CD4-positive, alpha-beta T cell (primary cell): ENCODE measurements at regions of chr18 and their contacts with region 1.

Region 1: DNA sequence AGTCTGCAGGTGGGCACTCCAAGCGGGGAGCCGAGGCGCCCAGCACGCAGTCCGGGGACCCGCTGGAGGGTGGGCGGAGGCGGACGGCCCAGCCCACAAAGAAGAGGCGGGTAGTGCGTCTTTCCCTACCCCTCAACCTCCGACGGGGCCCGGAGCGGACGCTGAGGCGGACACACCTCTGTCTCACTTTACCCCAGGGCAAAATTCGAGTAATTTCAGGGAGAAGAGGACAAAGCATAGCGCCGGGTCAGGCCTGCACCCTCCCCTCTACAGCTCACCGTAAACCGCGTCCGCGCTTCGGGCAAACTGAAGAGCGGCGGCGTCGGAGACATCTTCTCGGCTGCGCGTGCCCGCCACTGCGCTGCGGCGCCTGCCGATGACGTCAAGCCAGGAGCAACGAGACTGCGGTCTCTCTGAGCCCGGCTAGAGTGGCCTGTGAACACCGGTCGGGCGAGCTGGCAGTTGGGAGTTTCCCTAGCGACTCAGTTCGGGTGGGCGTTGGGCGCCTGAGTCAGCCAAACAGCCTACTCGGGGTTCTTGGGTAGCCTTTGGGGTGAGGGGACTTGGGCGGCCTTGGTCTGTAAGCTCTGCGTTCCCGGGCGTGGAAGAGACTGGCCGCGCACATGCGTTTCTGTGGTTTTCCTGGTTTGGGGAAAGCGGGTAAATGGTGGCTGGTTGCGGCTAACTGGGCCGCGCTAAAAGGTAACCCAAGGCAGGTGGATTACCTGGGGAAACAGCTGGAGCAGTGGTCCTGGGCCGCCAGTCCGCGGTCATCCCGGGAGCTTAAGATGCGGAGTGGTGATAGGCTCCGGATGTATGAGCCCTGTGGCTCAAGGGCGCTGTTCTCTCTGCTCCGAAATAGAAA is at the start of gene THOC1:
- DNase-seq: peak; percentile 85 to 97 (median 92)
- ATAC-seq: peak; percentile 89
- H3K4me3 ChIP-seq: peak within 1 kb of the TSS; percentile 99
- H3K4me3 Mint-ChIP-seq: peak within 1 kb of the TSS; percentile 98
- H3K27ac ChIP-seq: peak within 1 kb of the TSS; percentile 97 to 98
- H3K27ac Mint-ChIP-seq: peak within 1 kb of the TSS; percentile 100
- H3K4me1 ChIP-seq: peaks cover 24% of the 10 kb centered on the region
- H3K4me1 Mint-ChIP-seq: peaks cover 44% of the 10 kb centered on the region
- H3K27me3 ChIP-seq: no peaks in the 10 kb centered on the region
- H3K27me3 Mint-ChIP-seq: no peaks in the 10 kb centered on the region
- CTCF ChIP-seq: no peak
- total RNA-seq, gene THOC1: 92.9 to 96.5 TPM

Region 2: GRCh38 chr18:111292-112014 is 156.5 kb before region 1 on chr18:
- CTCF ChIA-PET with region 1: no interaction called
- POLR2A ChIA-PET with region 1: interaction called, 3 read pairs
- intact Hi-C with region 1: loop called in 1 of 2 experiments (anchors 5 kb)
- DNase-seq: peak; percentile 39 to 89 (median 70)
- ATAC-seq: peak; percentile 48
- H3K4me3 ChIP-seq: peak overlapping the region; percentile 41
- H3K4me3 Mint-ChIP-seq: peak overlapping the region; percentile 92
- H3K27ac ChIP-seq: peak overlapping the region in 1 of 2 donors; percentile 84
- H3K27ac Mint-ChIP-seq: peak overlapping the region; percentile 89
- H3K4me1 ChIP-seq: peaks cover 10% of the 10 kb centered on the region
- H3K4me1 Mint-ChIP-seq: peaks cover 15% of the 10 kb centered on the region
- H3K27me3 ChIP-seq: no peaks in the 10 kb centered on the region
- H3K27me3 Mint-ChIP-seq: peaks cover 4% of the 10 kb centered on the region
- CTCF ChIP-seq: no peak

Region 3: GRCh38 chr18:199768-200167 is 68.2 kb before region 1 on chr18:
- CTCF ChIA-PET with region 1: no interaction called
- POLR2A ChIA-PET with region 1: no interaction called
- intact Hi-C with region 1: loop called in 1 of 2 experiments (anchors 10 kb)
- DNase-seq: no peak
- ATAC-seq: no peak
- H3K4me3 ChIP-seq: no peak overlapping the region
- H3K4me3 Mint-ChIP-seq: no peak overlapping the region
- H3K27ac ChIP-seq: no peak overlapping the region
- H3K27ac Mint-ChIP-seq: no peak overlapping the region
- H3K4me1 ChIP-seq: no peaks in the 10 kb centered on the region
- H3K4me1 Mint-ChIP-seq: peaks cover 10% of the 10 kb centered on the region
- H3K27me3 ChIP-seq: no peaks in the 10 kb centered on the region
- H3K27me3 Mint-ChIP-seq: no peaks in the 10 kb centered on the region
- CTCF ChIP-seq: no peak

Region 4: DNA sequence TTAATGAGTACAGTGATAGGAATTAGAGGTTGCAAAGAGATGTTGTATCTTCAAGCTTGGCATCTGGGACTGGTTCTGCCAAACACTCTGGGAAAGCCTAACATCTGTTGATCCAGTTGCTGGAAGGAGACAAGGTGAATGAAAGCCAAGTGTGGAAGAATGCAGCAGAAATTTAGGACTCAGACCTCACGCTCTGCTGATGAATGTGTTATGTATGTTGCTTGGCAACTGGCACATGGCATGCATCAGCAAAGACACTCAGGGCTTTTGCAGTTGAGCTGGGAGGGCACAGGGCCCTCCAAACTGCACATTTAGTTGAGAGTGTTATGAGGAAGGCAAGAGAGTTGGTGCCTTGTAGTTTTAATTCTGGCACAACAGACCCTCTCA is 127.1 kb after region 1 on chr18:
- CTCF ChIA-PET with region 1: no interaction called
- POLR2A ChIA-PET with region 1: no interaction called
- intact Hi-C with region 1: no loop called
- DNase-seq: no peak
- ATAC-seq: no peak
- H3K4me3 ChIP-seq: no peak overlapping the region
- H3K4me3 Mint-ChIP-seq: no peak overlapping the region
- H3K27ac ChIP-seq: no peak overlapping the region
- H3K27ac Mint-ChIP-seq: no peak overlapping the region
- H3K4me1 ChIP-seq: no peaks in the 10 kb centered on the region
- H3K4me1 Mint-ChIP-seq: no peaks in the 10 kb centered on the region
- H3K27me3 ChIP-seq: peaks cover 0 to 5% of the 10 kb centered on the region in 2 experiments
- H3K27me3 Mint-ChIP-seq: peaks cover 7% of the 10 kb centered on the region
- CTCF ChIP-seq: no peak

Region 5: GRCh38 chr18:616380-616995 is 348.6 kb after region 1 on chr18:
- CTCF ChIA-PET with region 1: no interaction called
- POLR2A ChIA-PET with region 1: no interaction called
- intact Hi-C with region 1: loop called in 1 of 2 experiments (anchors 5 kb)
- DNase-seq: peak in 4 of 14 experiments; percentile 4 to 54 (median 46)
- ATAC-seq: no peak
- H3K4me3 ChIP-seq: no peak overlapping the region
- H3K4me3 Mint-ChIP-seq: no peak overlapping the region
- H3K27ac ChIP-seq: no peak overlapping the region
- H3K27ac Mint-ChIP-seq: no peak overlapping the region
- H3K4me1 ChIP-seq: no peaks in the 10 kb centered on the region
- H3K4me1 Mint-ChIP-seq: no peaks in the 10 kb centered on the region
- H3K27me3 ChIP-seq: peaks cover 0 to 5% of the 10 kb centered on the region in 2 experiments
- H3K27me3 Mint-ChIP-seq: peaks cover 7% of the 10 kb centered on the region
- CTCF ChIP-seq: peak; percentile 70

Region 6: GRCh38 chr18:812376-813171 is 544.7 kb after region 1 on chr18:
- CTCF ChIA-PET with region 1: no interaction called
- POLR2A ChIA-PET with region 1: interaction called, 3 read pairs
- intact Hi-C with region 1: loop called in 1 of 2 experiments (anchors 10 kb)
- DNase-seq: peak; percentile 51 to 88 (median 68)
- ATAC-seq: peak; percentile 66
- H3K4me3 ChIP-seq: peak overlapping the region; percentile 93
- H3K4me3 Mint-ChIP-seq: peak overlapping the region; percentile 90
- H3K27ac ChIP-seq: peak overlapping the region; percentile 93 to 95
- H3K27ac Mint-ChIP-seq: peak overlapping the region; percentile 94
- H3K4me1 ChIP-seq: peaks cover 30% of the 10 kb centered on the region
- H3K4me1 Mint-ChIP-seq: peaks cover 68% of the 10 kb centered on the region
- H3K27me3 ChIP-seq: no peaks in the 10 kb centered on the region
- H3K27me3 Mint-ChIP-seq: no peaks in the 10 kb centered on the region
- CTCF ChIP-seq: no peak